HepG2 (cell line): ENCODE measurements at regions of chrX and their contacts with region 1.

Region 1: GRCh38 chrX:47311932-47312774 is 58.2 kb upstream of the ZNF157 start:
- DNase-seq: peak; percentile 45
- ATAC-seq: peak; percentile 80
- H3K4me3 ChIP-seq: peak overlapping the region in 1 of 3 experiments; percentile 23; a peak in 2 of 6 replicates
- H3K27ac ChIP-seq: no peak overlapping the region
- H3K4me1 ChIP-seq: peaks cover 13% of the 10 kb centered on the region; the same call in 1 of the 2 replicates
- H3K27me3 ChIP-seq: no peaks in the 10 kb centered on the region
- CTCF ChIP-seq: peak; percentile 61
- EP300 ChIP-seq: no peak
- POLR2A ChIP-seq: no peak
- RAD21 ChIP-seq: no peak

Region 2: GRCh38 chrX:47233337-47234113 is 78.6 kb before region 1 on chrX:
- CTCF ChIA-PET with region 1: no interaction called
- POLR2A ChIA-PET with region 1: interaction called, 5 read pairs
- in situ Hi-C with region 1: no loop called
- intact Hi-C with region 1: loop called (anchors 10 kb)
- DNase-seq: peak; percentile 89
- ATAC-seq: peak; percentile 87
- H3K4me3 ChIP-seq: peak overlapping the region; percentile 67 to 73 (median 69)
- H3K27ac ChIP-seq: peak overlapping the region; percentile 90
- H3K4me1 ChIP-seq: peaks cover 41% of the 10 kb centered on the region
- H3K27me3 ChIP-seq: no peaks in the 10 kb centered on the region; a peak in 1 of 5 replicates
- CTCF ChIP-seq: no peak
- EP300 ChIP-seq: 0 out of 4 replicates have a peak, but pooled peaks of 1 of the 2 experiments have one; percentile 7
- POLR2A ChIP-seq: peak; percentile 34 to 37; a peak in 1 of 4 replicates
- RAD21 ChIP-seq: no peak

Region 3: DNA sequence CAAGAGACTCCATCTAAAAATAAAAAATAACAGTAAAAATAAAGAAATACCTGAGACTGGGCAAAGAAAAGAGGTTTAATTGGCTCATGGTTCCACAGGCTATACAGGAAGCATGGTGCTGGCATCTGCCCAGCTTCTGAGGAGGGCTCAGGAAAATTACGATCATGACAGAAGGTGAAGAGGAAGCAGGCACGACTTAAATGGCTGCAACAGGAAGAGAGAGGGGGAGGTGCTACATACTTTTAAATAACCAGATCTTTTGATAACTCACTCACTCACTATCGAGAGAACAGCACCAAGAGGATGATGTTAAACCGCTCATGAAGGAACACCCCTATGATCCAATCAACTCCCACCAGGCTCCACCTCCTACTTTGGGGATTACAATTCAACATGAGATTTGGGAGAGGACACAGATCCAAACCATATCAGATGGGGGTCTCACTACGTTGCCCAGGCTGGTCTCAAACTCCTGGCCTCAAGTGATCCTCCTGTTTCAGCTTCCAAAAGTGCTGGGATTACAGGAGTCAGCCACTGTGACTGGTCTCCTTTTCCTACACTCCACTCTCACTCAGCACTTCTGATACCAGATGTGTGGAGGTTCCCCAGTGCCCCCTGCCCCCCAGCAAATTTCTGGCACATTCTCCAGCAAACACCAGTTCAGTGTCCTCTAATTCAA is 46.4 kb after region 1 on chrX:
- CTCF ChIA-PET with region 1: no interaction called
- POLR2A ChIA-PET with region 1: no interaction called
- in situ Hi-C with region 1: no loop called
- intact Hi-C with region 1: no loop called
- DNase-seq: no peak
- ATAC-seq: no peak
- H3K4me3 ChIP-seq: no peak overlapping the region
- H3K27ac ChIP-seq: no peak overlapping the region
- H3K4me1 ChIP-seq: peaks cover 18% of the 10 kb centered on the region
- H3K27me3 ChIP-seq: no peaks in the 10 kb centered on the region
- CTCF ChIP-seq: no peak
- EP300 ChIP-seq: no peak
- POLR2A ChIP-seq: no peak
- RAD21 ChIP-seq: no peak